Prostate gland (tissue), 2 donors: ENCODE measurements at regions of chr12 and their contacts with region 1.

Region 1: GRCh38 chr12:68686595-68687521 is at the start of gene NUP107:
- DNase-seq: peak; percentile 97
- H3K4me3 ChIP-seq: peak within 1 kb of the TSS; percentile 77 to 82
- H3K27ac ChIP-seq: peak within 1 kb of the TSS; percentile 67 to 69
- H3K4me1 ChIP-seq: no peaks in the 10 kb centered on the region
- H3K27me3 ChIP-seq: no peaks in the 10 kb centered on the region
- CTCF ChIP-seq: peak in 3 of 4 experiments; percentile 15 to 54 (median 47)
- POLR2A ChIP-seq: peak; percentile 73
- total RNA-seq, gene NUP107: 27.9 to 37.0 TPM

Region 2: GRCh38 chr12:68358532-68359485 is 328.0 kb before region 1 on chr12:
- intact Hi-C with region 1: loop called (anchors 5 kb)
- DNase-seq: peak; percentile 69
- H3K4me3 ChIP-seq: no peak overlapping the region
- H3K27ac ChIP-seq: no peak overlapping the region
- H3K4me1 ChIP-seq: no peaks in the 10 kb centered on the region
- H3K27me3 ChIP-seq: no peaks in the 10 kb centered on the region
- CTCF ChIP-seq: peak; percentile 35 to 81 (median 66)
- POLR2A ChIP-seq: no peak

Region 3: DNA sequence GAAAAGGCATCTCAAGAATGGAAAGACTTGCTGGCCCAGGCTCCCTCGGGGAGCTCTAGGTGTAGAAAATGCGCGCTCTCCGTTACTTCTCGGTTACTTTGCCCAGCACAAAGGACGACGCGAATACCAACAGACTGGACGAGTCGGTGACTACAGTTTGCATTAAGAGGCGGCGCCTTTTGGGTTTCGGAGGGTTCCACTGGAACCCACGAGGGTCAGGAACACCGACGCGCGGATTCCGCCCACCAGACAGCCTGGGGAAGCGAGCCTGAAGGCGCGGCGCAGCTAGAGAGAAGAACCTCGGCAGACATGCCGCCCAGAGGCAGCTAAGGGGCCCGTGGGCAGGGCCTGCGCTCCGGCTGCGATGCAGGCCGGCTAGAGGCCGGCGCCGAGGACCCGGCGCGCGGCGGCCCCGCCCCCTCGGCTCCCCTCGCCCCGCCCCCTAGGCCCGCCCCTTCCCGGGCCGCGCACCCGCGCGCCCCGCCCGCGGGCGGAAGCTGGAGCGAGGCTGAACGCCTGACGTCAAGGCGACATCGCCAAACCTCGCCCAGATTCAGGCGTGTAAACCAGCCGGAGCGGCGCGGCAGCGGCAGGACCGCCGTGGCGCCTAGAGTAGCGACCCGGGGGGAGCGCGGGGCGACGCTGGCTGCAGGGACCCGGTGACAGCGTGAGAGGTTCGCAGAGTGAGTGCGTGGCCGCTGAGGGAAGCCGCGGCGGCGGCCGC is 76.3 kb before region 1 on chr12 and contains the start of gene RAP1B:
- intact Hi-C with region 1: loop called (anchors 2 kb)
- DNase-seq: peak; percentile 90
- H3K4me3 ChIP-seq: peak within 1 kb of the TSS; percentile 66 to 81
- H3K27ac ChIP-seq: peak within 1 kb of the TSS; percentile 97 to 99
- H3K4me1 ChIP-seq: no peaks in the 10 kb centered on the region
- H3K27me3 ChIP-seq: no peaks in the 10 kb centered on the region
- CTCF ChIP-seq: peak in 1 of 4 experiments; percentile 10
- POLR2A ChIP-seq: peak; percentile 97
- total RNA-seq, gene RAP1B: 105 to 145 TPM